Cardiac septum (tissue), 1 donor: ENCODE measurements at regions of chr2 and their contacts with region 1.

Region 1: GRCh38 chr2:70789304-70790135 is 923 bp downstream of the FIGLA start:
- DNase-seq: no peak

Region 2: DNA sequence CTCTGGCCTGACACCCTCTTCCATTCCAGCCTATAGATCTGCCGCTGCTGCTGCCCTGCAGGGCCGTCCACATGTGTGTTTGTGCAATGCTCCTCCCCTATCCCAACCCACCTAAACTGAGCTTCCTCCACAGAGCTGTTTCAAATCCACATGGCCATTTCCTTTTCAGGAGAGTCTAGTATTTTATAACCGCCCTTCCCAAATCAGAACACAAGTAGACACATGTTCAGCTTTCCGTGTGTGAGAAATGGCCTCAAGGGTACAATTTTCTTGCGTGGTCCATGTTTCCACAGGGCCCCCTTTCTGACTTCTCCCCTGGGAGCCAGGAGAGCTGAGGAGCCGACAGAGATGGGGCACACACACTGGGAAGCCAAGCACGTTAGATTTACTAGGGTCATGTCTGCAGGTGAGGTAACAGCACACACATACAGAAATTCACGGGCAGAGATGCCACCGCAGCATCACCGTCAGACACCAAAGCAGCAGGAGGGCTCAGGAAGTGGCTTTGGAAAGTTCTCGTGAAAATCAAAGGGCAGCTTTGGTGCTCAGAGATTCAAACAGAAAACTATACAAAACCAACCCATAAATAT is 133.0 kb before region 1 on chr2:
- intact Hi-C with region 1: loop called (anchors 5 kb)
- DNase-seq: no peak

Region 3: GRCh38 chr2:70726947-70727725 is 62.4 kb before region 1 on chr2:
- intact Hi-C with region 1: no loop called
- DNase-seq: no peak

Region 4: DNA sequence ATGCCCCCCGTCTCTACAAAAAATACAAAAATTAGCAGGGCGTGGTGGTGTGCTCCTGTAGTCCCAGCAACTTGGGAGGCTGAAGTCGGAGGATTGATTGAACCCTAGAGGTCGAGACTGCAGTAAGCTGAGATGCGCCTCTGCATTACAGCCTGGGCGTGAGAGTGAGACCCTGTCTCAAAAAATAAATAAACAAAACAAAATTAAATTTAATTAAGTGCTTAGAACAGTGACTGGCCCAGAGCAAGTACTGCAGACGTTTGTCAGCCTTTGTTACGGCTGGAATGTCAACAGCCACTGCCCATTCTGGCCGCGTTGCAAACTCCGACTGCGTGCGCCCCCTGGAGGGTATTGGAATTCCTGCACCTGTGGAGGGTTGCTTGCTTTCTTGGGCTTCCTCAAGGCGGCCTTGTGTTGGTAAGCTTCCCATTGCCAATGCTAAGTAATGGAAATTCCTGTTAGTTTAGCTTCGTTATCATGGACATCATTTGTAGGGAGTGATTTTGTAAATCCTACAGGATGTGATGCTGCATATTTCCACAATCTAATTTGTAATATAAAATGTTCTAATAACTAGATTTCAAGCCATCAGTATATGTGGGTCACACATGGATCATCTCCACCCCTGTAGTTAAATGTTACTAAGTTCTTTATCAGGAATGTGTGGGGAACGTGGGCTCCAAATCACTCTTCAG is 130.3 kb after region 1 on chr2:
- intact Hi-C with region 1: loop called (anchors 10 kb)
- DNase-seq: peak; percentile 84

Region 5: GRCh38 chr2:70948337-70949003 is 158.9 kb after region 1 on chr2:
- intact Hi-C with region 1: loop called (anchors 5 kb)
- DNase-seq: peak; percentile 85